MCF 10A (cell line): ENCODE measurements at regions of chr3 and their contacts with region 1.

Region 1: DNA sequence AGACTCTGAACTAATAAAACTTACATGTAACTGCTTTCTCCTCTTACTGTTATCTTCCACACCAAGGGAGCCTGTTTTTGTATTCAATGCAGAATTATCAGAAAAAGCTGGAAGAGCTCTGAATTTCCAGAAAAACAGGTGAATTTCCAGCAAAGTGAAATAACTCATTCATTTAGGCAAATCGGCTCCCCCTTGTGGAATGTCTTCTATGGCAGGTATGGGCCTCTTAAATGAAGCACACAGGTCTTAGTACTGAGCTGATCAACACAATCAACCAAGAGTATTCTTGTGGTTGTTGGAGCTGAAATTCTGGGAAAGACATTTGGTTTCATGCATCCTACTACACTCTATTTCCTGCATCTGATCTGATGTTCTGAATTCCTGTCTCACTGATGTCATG is 31.0 kb upstream of the PTPRG start:
- DNase-seq: peak; percentile 67
- H3K4me3 Mint-ChIP-seq: no peak overlapping the region
- H3K27ac Mint-ChIP-seq: no peak overlapping the region
- H3K4me1 Mint-ChIP-seq: peaks cover 4% of the 10 kb centered on the region
- H3K27me3 Mint-ChIP-seq: no peaks in the 10 kb centered on the region
- CTCF ChIP-seq: peak; percentile 70

Region 2: GRCh38 chr3:61417352-61417751 is 113.0 kb before region 1 on chr3:
- CTCF ChIA-PET with region 1: interaction called, 11 read pairs
- POLR2A ChIA-PET with region 1: no interaction called
- intact Hi-C with region 1: no loop called
- DNase-seq: peak; percentile 75
- H3K4me3 Mint-ChIP-seq: no peak overlapping the region
- H3K27ac Mint-ChIP-seq: peak overlapping the region; percentile 61
- H3K4me1 Mint-ChIP-seq: peaks cover 20% of the 10 kb centered on the region
- H3K27me3 Mint-ChIP-seq: no peaks in the 10 kb centered on the region
- CTCF ChIP-seq: no peak

Region 3: DNA sequence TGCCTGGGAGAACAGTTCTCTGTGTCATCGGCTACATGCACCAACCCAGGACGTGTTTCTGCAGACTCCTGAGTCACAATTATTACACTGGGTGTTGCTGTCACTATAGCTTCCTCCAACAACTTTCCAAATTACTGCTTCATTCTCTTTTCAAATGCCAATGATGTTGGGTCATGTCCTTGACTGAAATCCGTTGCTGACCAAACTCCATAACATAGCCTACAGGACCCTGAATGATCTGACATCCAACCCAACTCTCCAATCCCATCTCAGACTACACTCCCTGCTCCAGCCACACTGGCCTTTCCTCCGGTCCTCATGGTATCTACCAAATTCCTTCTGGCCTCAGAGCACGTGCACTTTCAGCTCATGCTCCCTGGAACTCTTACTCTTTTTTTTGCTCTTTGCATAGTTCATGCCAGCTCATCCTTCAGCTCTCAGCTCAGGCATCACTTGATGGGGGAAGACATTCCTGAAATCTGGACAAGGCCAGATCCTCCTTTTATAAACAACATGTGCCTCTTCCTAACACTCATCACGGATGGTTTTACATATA is 77.7 kb before region 1 on chr3:
- CTCF ChIA-PET with region 1: interaction called, 4 read pairs
- POLR2A ChIA-PET with region 1: no interaction called
- intact Hi-C with region 1: loop called (anchors 2 kb)
- DNase-seq: peak; percentile 27
- H3K4me3 Mint-ChIP-seq: no peak overlapping the region
- H3K27ac Mint-ChIP-seq: peak overlapping the region; percentile 96
- H3K4me1 Mint-ChIP-seq: peaks cover 43% of the 10 kb centered on the region
- H3K27me3 Mint-ChIP-seq: no peaks in the 10 kb centered on the region
- CTCF ChIP-seq: no peak

Region 4: DNA sequence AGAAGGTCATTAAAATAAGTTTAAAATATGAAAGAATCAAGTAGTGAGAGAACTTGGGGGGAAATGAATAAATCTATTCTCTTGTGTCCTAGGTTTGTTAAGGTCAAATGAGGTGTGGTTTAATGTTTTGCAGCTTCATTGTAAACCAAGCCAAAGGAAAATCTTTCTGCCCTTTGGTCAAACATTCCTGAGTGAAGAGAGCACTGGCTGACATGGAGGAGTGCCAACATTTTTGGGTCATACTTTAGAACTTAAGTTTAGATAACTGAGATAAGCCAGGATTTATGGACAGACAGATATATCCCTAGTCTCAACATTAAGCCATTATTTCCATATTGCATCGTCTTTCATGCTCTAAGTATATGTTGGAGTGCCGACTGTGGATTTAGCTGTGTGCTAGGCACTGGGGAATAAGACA is 97.4 kb after region 1 on chr3:
- CTCF ChIA-PET with region 1: no interaction called
- POLR2A ChIA-PET with region 1: no interaction called
- intact Hi-C with region 1: no loop called
- DNase-seq: peak; percentile 67
- H3K4me3 Mint-ChIP-seq: peak overlapping the region; percentile 31
- H3K27ac Mint-ChIP-seq: peak overlapping the region; percentile 75
- H3K4me1 Mint-ChIP-seq: peaks cover 40% of the 10 kb centered on the region
- H3K27me3 Mint-ChIP-seq: no peaks in the 10 kb centered on the region
- CTCF ChIP-seq: no peak